A549 (cell line): ENCODE measurements at regions of chr17 and their contacts with region 1.

Region 1: GRCh38 chr17:44655983-44656710 is at the start of gene MEIOC:
- DNase-seq: peak; percentile 95 to 97
- ATAC-seq: peak; percentile 97
- H3K4me3 ChIP-seq: peak within 1 kb of the TSS; percentile 58
- H3K27ac ChIP-seq: peak within 1 kb of the TSS; percentile 71 to 89
- H3K4me1 ChIP-seq: 0 out of 3 replicates have a peak, but pooled peaks cover 4% of the 10 kb centered on the region
- CTCF ChIP-seq: peak; percentile 46
- EP300 ChIP-seq: no peak
- POLR2A ChIP-seq: no peak; the same call in 1 of the 2 replicates
- RAD21 ChIP-seq: peak in 1 of 2 experiments; percentile 19; a peak in 1 of 5 replicates
- polyA plus RNA-seq, gene MEIOC: 18.0 and 18.2 TPM in 2 replicates

Region 2: GRCh38 chr17:44636562-44636961 is 19.6 kb before region 1 on chr17:
- CTCF ChIA-PET with region 1: interaction called, 14 read pairs
- POLR2A ChIA-PET with region 1: no interaction called
- DNase-seq: peak; percentile 67 to 69
- ATAC-seq: peak; percentile 88 to 94
- H3K4me3 ChIP-seq: no peak overlapping the region
- H3K27ac ChIP-seq: peak overlapping the region in 1 of 2 experiments; percentile 1; a peak in 1 of 6 replicates
- H3K4me1 ChIP-seq: peaks cover 22% of the 10 kb centered on the region
- CTCF ChIP-seq: peak; percentile 97
- EP300 ChIP-seq: no peak
- POLR2A ChIP-seq: no peak
- RAD21 ChIP-seq: peak; percentile 99

Region 3: GRCh38 chr17:44642834-44643233 is 13.3 kb before region 1 on chr17:
- CTCF ChIA-PET with region 1: interaction called, 26 read pairs
- POLR2A ChIA-PET with region 1: no interaction called
- DNase-seq: no peak
- ATAC-seq: no peak
- H3K4me3 ChIP-seq: no peak overlapping the region
- H3K27ac ChIP-seq: no peak overlapping the region
- H3K4me1 ChIP-seq: no peaks in the 10 kb centered on the region
- CTCF ChIP-seq: no peak
- EP300 ChIP-seq: no peak
- POLR2A ChIP-seq: no peak
- RAD21 ChIP-seq: no peak

Region 4: DNA sequence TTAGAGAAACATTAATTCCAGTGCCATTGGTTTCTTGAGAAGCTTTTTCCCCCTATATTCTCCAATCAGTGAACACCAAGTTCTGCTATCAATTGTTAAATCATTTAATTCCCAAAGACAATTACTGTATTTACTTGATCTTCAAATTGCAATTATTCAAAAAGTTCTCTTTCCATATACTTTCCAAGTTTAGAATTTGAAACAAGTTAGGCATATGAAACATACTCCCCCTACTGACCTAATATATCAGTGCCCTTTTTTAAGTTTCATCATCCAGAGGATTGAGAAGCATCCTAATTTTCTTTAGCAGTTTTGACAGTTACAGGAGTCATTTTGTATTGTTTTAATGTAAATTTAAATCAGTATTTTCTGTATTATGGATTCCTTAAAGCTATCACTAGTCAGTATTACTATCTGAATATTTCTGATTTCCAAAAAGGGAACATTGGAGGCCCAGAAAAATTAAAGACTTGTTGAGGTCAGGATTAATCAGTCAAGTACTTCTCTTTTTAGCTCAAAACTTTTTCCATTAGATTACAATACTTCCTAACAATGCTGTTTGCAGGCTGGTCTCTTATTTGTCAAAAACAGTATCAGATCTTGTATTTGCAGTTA is 16.4 kb after region 1 on chr17:
- CTCF ChIA-PET with region 1: interaction called, 17 read pairs
- POLR2A ChIA-PET with region 1: interaction called, 3 read pairs
- DNase-seq: peak; percentile 42 to 60
- ATAC-seq: peak; percentile 66 to 70; a peak in 3 of 6 replicates
- H3K4me3 ChIP-seq: no peak overlapping the region
- H3K27ac ChIP-seq: no peak overlapping the region
- H3K4me1 ChIP-seq: no peaks in the 10 kb centered on the region
- CTCF ChIP-seq: peak; percentile 74
- EP300 ChIP-seq: no peak
- POLR2A ChIP-seq: no peak
- RAD21 ChIP-seq: peak; percentile 61 to 76